Left lung (tissue), 14 donors: ENCODE measurements at regions of chr7 and their contacts with region 1.

Region 1: DNA sequence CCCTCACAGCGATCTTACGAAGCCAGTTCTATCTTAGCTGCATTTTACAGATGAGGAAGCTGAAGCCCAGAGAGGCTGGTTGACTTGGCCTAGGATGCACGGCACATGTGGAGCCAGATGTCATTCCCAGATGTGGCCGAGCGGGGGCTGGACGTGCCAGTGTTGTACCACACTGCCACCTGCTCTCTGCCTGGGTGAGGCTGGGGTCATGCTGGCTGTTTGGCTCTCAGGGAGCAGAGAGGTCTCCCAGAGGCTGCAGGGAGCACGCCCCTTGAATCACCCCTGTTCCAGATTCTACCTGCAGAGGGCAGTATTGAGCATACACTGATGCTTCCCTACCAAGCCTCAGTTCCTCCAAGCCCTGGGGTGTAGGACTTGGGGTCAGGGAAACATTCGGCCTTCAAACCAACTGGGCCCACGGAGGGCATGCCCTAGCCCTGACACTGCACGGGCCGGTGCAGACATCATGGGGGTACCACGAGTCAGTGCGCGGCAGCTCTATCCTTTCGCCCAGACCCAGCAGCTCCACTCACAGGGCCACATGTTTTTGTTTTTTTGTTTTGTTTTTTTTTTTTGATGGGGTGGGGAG is 3.8 kb upstream of the GTF2IRD1 start:
- DNase-seq: peak in 2 of 4 donors; percentile 32 to 51
- ATAC-seq: peak; percentile 69
- H3K4me3 ChIP-seq: no peak overlapping the region
- H3K27ac ChIP-seq: no peak overlapping the region
- H3K4me1 ChIP-seq: peaks cover 0 to 29% of the 10 kb centered on the region in 2 donors
- H3K27me3 ChIP-seq: peaks cover 0 to 33% of the 10 kb centered on the region in 2 donors
- CTCF ChIP-seq: peak; percentile 89 to 92

Region 2: GRCh38 chr7:74569501-74570075 is 119.7 kb after region 1 on chr7:
- intact Hi-C with region 1: loop called in 1 of 2 experiments (anchors 10 kb)
- DNase-seq: no peak
- ATAC-seq: no peak
- H3K4me3 ChIP-seq: no peak overlapping the region
- H3K27ac ChIP-seq: no peak overlapping the region
- H3K4me1 ChIP-seq: no peaks in the 10 kb centered on the region
- H3K27me3 ChIP-seq: no peaks in the 10 kb centered on the region
- CTCF ChIP-seq: no peak